Calu3 (cell line): ENCODE measurements at regions of chr3 and their contacts with region 1.

Region 1: DNA sequence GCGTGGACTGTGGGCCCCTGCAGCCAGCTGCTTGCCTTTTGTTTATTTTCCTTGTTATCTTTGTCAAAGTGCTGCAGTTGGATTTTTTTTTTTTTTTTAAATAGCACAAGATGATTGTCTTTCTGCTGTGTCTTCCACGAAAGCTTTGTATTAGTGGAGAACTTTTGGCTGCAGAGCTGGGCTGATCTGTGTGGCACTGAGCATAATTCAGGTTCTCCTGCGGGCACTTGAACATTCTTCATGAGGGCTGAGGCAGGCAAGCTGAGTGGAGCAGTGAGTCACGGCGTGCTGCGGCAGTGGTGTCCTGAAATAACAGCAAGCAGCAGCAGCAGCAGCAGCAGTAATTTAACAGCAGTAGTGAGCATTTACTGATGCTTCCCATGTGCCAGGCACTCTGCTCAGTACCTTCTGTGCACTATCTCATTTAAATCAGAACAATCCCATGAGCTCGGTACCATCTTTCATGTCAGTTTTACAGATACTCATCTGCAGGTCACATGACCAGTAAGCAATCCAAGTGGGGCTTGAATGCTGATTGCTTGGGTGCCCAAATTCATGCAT is 45.8 kb downstream of the MITF start:
- DNase-seq: peak; percentile 50
- H3K4me3 Mint-ChIP-seq: no peak overlapping the region
- H3K27ac Mint-ChIP-seq: no peak overlapping the region
- H3K4me1 Mint-ChIP-seq: peaks cover 26% of the 10 kb centered on the region
- H3K27me3 Mint-ChIP-seq: no peaks in the 10 kb centered on the region
- CTCF ChIP-seq: no peak

Region 2: GRCh38 chr3:69770219-69770618 is 14.8 kb before region 1 on chr3:
- CTCF ChIA-PET with region 1: interaction called, 3 read pairs
- intact Hi-C with region 1: loop called (anchors 1 kb)
- DNase-seq: peak; percentile 23
- H3K4me3 Mint-ChIP-seq: peak overlapping the region; percentile 48
- H3K27ac Mint-ChIP-seq: peak overlapping the region; percentile 75
- H3K4me1 Mint-ChIP-seq: peaks cover 58% of the 10 kb centered on the region
- H3K27me3 Mint-ChIP-seq: no peaks in the 10 kb centered on the region
- CTCF ChIP-seq: no peak

Region 3: GRCh38 chr3:69855436-69856162 is 70.6 kb after region 1 on chr3:
- CTCF ChIA-PET with region 1: no interaction called
- intact Hi-C with region 1: loop called (anchors 5 kb)
- DNase-seq: no peak
- H3K4me3 Mint-ChIP-seq: no peak overlapping the region
- H3K27ac Mint-ChIP-seq: no peak overlapping the region
- H3K4me1 Mint-ChIP-seq: peaks cover 28% of the 10 kb centered on the region
- H3K27me3 Mint-ChIP-seq: no peaks in the 10 kb centered on the region
- CTCF ChIP-seq: no peak